Left lung (tissue), 14 donors: ENCODE measurements at regions of chr1 and their contacts with region 1.

Region 1: GRCh38 chr1:110455151-110455550 is 4.2 kb downstream of the PROK1 start:
- DNase-seq: no peak
- ATAC-seq: no peak
- H3K4me3 ChIP-seq: no peak overlapping the region
- H3K27ac ChIP-seq: no peak overlapping the region
- H3K4me1 ChIP-seq: no peaks in the 10 kb centered on the region
- H3K27me3 ChIP-seq: peaks cover 0 to 4% of the 10 kb centered on the region in 2 donors
- CTCF ChIP-seq: no peak

Region 2: DNA sequence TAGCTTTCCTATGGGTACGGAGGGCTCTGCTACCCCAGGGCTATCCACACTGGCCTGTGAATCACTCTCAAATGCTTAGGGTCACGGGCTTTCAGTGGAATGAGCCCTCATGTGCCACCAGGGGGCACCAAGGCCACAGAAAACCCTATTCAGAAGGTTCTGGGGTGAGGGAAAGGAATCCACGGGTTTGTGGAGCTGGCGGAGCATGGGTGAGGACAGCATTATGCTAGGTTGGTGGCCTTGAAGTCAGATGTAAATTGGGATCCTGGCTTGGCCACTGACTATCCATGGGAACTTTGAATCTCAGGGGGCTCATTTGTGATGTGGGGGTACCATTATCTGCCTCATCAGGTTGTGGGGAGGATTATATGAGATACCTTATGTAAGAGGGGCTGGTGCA is 42.6 kb before region 1 on chr1:
- intact Hi-C with region 1: loop called in 1 of 2 experiments (anchors 5 kb)
- DNase-seq: peak; percentile 39 to 80 (median 66)
- ATAC-seq: peak; percentile 87
- H3K4me3 ChIP-seq: no peak overlapping the region
- H3K27ac ChIP-seq: no peak overlapping the region
- H3K4me1 ChIP-seq: peaks cover 0 to 19% of the 10 kb centered on the region in 2 donors
- H3K27me3 ChIP-seq: no peaks in the 10 kb centered on the region
- CTCF ChIP-seq: peak; percentile 51 to 83

Region 3: GRCh38 chr1:110554871-110555801 is 100.0 kb after region 1 on chr1:
- intact Hi-C with region 1: no loop called
- DNase-seq: peak; percentile 29 to 86 (median 42)
- ATAC-seq: peak; percentile 95
- H3K4me3 ChIP-seq: peak overlapping the region; percentile 23 to 26
- H3K27ac ChIP-seq: no peak overlapping the region
- H3K4me1 ChIP-seq: peaks cover 0 to 10% of the 10 kb centered on the region in 2 donors
- H3K27me3 ChIP-seq: peaks cover 9 to 87% of the 10 kb centered on the region in 2 donors
- CTCF ChIP-seq: peak; percentile 64 to 78